H1 (cell line): ENCODE measurements at regions of chr6 and their contacts with region 1.

Region 1: DNA sequence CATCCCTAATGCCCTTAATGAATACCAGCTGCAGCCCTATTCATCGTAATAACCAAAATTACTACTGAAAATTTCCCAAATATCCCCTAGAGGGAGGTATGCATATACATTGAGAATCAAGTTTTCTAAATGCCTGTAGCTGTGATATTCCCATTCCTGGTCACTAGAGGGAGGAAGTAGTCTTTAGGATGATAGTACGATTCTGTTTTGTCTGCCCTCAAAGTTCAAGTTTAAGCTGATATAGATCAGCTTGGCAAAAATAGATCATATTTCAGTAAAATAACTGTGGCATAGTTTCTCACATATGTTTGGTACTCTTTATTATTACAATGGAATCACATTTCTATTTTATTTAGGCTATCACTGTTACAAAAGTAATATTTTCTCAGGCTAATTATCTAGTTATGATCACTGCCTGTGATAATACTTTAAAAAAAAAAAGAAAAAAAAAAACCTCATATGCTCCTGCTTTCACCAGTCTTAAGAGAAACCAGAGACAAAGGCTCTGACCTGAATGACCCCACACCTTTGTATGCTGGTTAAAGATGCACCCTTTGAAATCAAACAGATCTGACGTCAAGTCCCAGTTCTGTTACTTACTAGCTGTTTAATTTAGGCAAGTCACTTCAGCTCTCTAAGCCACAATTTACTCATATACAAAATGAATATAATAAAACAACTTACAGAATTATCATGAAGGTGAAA is 11.0 kb downstream of the TSPYL1 start:
- DNase-seq: no peak
- H3K4me3 ChIP-seq: no peak overlapping the region
- H3K27ac ChIP-seq: no peak overlapping the region
- H3K4me1 ChIP-seq: peaks cover 0 to 10% (median 7%) of the 10 kb centered on the region in 4 experiments; a peak in 5 of 7 replicates
- H3K27me3 ChIP-seq: no peaks in the 10 kb centered on the region
- CTCF ChIP-seq: peak in 2 of 3 experiments; percentile 81 to 95; a peak in 3 of 4 replicates
- EP300 ChIP-seq: no peak
- POLR2A ChIP-seq: no peak
- RAD21 ChIP-seq: peak; percentile 88

Region 2: GRCh38 chr6:116229287-116229913 is 39.3 kb before region 1 on chr6:
- CTCF ChIA-PET with region 1: interaction called, 14 read pairs
- POLR2A ChIA-PET with region 1: no interaction called
- DNase-seq: peak; percentile 71 to 98
- H3K4me3 ChIP-seq: peak overlapping the region in 1 of 4 experiments; percentile 40; a peak in 3 of 8 replicates
- H3K27ac ChIP-seq: no peak overlapping the region; the same call in 1 of the 2 replicates
- H3K4me1 ChIP-seq: peaks cover 0 to 5% (median 1%) of the 10 kb centered on the region in 4 experiments; a peak in 3 of 7 replicates
- H3K27me3 ChIP-seq: no peaks in the 10 kb centered on the region
- CTCF ChIP-seq: no peak
- EP300 ChIP-seq: no peak
- POLR2A ChIP-seq: peak in 1 of 2 experiments; percentile 58; a peak in 1 of 3 replicates
- RAD21 ChIP-seq: no peak

Region 3: GRCh38 chr6:116253505-116254296 is 15.0 kb before region 1 on chr6 and contains the start of gene TSPYL4:
- CTCF ChIA-PET with region 1: interaction called, 40 read pairs
- POLR2A ChIA-PET with region 1: interaction called, 23 read pairs
- DNase-seq: peak; percentile 71 to 92
- H3K4me3 ChIP-seq: peak within 1 kb of the TSS; percentile 81 to 95 (median 88)
- H3K27ac ChIP-seq: peak within 1 kb of the TSS; percentile 74
- H3K4me1 ChIP-seq: peaks cover 7 to 21% (median 18%) of the 10 kb centered on the region in 4 experiments
- H3K27me3 ChIP-seq: no peaks in the 10 kb centered on the region
- CTCF ChIP-seq: no peak
- EP300 ChIP-seq: no peak
- POLR2A ChIP-seq: peak; percentile 59 to 77; a peak in 2 of 3 replicates
- RAD21 ChIP-seq: no peak
- total RNA-seq, gene TSPYL4: 22.6 and 23.3 TPM in 2 replicates

Region 4: DNA sequence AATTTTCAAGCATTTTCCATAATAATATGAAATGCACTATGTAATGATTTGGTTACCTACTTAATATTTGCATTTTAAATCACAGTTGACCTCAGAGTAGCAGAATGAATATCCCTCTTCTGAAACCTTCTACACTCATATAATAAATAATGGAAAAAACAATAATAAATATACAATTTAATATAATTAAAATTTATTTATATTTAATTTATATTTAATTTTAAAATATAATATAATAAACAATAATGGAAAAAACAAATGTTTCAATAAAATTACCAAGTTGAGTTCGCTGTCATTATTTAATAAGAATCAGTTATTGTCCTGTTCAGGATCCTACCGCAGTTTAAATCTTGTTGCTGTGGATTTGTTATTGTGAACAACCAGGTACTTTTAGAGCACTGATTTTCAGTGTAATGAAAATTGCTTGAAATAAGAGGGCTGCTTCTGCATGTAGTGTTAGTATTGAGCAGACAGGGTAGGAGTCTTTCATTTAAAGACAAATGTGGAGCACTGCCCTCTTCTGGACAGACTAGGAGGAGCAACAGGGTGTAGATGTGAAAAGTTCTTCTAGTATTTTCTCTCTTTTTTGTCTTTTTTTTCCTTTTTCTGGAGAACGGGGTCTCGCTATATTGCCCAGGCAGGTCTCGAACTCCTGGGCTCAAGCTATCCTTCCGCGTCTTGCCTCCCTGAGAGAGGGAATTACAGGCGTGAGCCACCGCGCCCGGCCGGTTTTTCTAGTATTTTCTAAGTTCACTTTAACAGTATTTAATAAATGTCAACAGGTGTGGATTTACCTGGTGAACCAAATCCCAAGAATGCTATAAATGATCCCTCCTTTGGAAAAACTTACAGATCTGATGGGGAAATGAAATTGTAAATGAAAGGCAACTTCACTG is 263.2 kb after region 1 on chr6:
- CTCF ChIA-PET with region 1: interaction called, 60 read pairs
- POLR2A ChIA-PET with region 1: interaction called, 3 read pairs
- DNase-seq: peak in 1 of 2 experiments; percentile 79
- H3K4me3 ChIP-seq: no peak overlapping the region
- H3K27ac ChIP-seq: no peak overlapping the region
- H3K4me1 ChIP-seq: peaks cover 0 to 12% (median 9%) of the 10 kb centered on the region in 4 experiments; a peak in 5 of 7 replicates
- H3K27me3 ChIP-seq: no peaks in the 10 kb centered on the region
- CTCF ChIP-seq: peak in 2 of 3 experiments; percentile 74 to 86; a peak in 3 of 4 replicates
- EP300 ChIP-seq: no peak
- POLR2A ChIP-seq: no peak
- RAD21 ChIP-seq: peak; percentile 66 to 74

Region 5: GRCh38 chr6:116570856-116571682 is 302.3 kb after region 1 on chr6 and contains the start of gene RWDD1:
- CTCF ChIA-PET with region 1: interaction called, 55 read pairs
- POLR2A ChIA-PET with region 1: no interaction called
- DNase-seq: peak; percentile 95 to 98
- H3K4me3 ChIP-seq: peak within 1 kb of the TSS; percentile 76 to 97 (median 90)
- H3K27ac ChIP-seq: peak within 1 kb of the TSS; percentile 27; the same call in 1 of the 2 replicates
- H3K4me1 ChIP-seq: peaks cover 0 to 3% (median 1%) of the 10 kb centered on the region in 4 experiments; a peak in 3 of 7 replicates
- H3K27me3 ChIP-seq: no peaks in the 10 kb centered on the region
- CTCF ChIP-seq: peak in 1 of 3 experiments; percentile 6; a peak in 1 of 4 replicates
- EP300 ChIP-seq: 0 out of 3 replicates have a peak, but pooled peaks of 1 of the 2 experiments have one; percentile 21
- POLR2A ChIP-seq: peak; percentile 69 to 75; a peak in 2 of 3 replicates
- RAD21 ChIP-seq: peak in 1 of 2 experiments; percentile 21; a peak in 1 of 4 replicates
- total RNA-seq, gene RWDD1: 35.2 and 36.8 TPM in 2 replicates